Posterior vena cava (tissue), 2 donors: ENCODE measurements at regions of chr6 and their contacts with region 1.

Region 1: GRCh38 chr6:89432875-89433251 is at the start of gene ANKRD6:
- DNase-seq: peak; percentile 93
- total RNA-seq, gene ANKRD6: 14.6 to 16.0 TPM

Region 2: GRCh38 chr6:89022798-89023197 is 410.1 kb before region 1 on chr6:
- intact Hi-C with region 1: no loop called
- DNase-seq: no peak

Region 3: DNA sequence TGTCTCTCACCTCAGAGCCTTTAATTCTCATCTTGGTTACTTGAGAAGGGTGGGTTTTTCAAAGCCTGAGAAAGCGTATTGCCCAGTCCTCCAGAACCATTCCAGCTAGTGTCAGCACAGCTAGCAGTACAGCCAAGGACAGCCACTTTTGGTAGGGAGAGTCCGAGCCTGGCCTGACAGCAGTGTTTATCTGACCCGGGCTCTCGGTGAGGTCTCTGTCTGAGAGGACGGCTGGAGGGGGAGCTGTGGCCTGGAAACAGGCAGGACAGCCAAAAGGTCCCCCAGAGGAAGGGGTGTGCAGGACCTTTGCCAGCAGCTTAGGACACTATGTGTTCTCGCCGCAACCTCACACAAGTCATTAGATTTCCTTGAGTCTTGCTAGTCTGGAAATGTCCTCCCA is 166.9 kb after region 1 on chr6:
- intact Hi-C with region 1: loop called in 1 of 2 experiments (anchors 10 kb)
- DNase-seq: no peak

Region 4: GRCh38 chr6:89610149-89610642 is 177.3 kb after region 1 on chr6:
- intact Hi-C with region 1: loop called (anchors 2 to 10 kb)
- DNase-seq: peak; percentile 87